ENCODE measurements at regions of chr12 and their contacts with region 1.

Region 1: DNA sequence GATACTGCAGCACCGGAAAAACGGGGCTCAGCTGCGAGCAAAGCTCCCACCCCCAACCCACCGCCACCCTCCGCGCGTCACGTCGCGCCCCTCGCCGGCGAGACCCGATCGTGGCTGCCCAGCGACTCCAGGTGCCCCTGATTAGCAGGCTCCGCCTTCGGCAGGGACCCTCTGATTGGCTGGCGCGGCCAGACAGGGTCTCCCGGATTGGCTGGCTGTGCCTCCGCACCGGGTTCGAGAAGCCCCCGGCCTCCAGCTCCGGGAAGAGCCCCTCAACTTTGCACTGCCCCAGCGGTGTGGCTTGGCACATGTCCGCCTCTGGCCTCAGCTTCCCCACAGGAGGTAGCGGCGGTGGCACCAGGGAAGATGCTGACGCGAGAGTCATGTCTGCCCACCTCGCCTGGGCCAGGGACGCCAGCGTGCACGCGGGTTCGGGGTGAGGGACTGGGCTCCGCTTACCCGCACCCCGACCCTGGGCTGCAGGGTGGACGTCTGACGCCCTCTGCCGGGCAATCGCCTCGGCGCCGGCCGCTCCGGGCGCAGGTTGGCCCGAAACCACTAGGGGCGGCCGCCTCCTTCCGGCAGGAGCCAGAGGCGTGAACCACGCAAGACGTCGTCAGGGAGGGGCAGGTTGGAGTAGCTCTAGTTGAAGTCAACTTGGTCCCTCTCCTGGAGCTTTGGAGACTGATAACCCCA is 498 bp upstream of the RHOF start:
- DNase-seq: peak; percentile 93 to 94
- H3K4me3 ChIP-seq: peak overlapping the region in 2 of 3 donors; percentile 3 to 32
- H3K27ac ChIP-seq: peak overlapping the region; percentile 97 to 100 (median 100)
- H3K4me1 ChIP-seq: peaks cover 62 to 78% of the 10 kb centered on the region in 2 donors
- H3K27me3 ChIP-seq: no peaks in the 10 kb centered on the region
- CTCF ChIP-seq: peak; percentile 98 to 100 (median 100)
- POLR2A ChIP-seq: peak in 1 of 2 donors; percentile 28

Region 2: GRCh38 chr12:121811434-121812319 is 17.7 kb after region 1 on chr12:
- intact Hi-C with region 1: loop called (anchors 2 kb)
- DNase-seq: peak; percentile 81
- H3K4me3 ChIP-seq: peak overlapping the region; percentile 7 to 36 (median 27)
- H3K27ac ChIP-seq: peak overlapping the region in 2 of 3 donors; percentile 59 to 69
- H3K4me1 ChIP-seq: peaks cover 20 to 42% of the 10 kb centered on the region in 2 donors
- H3K27me3 ChIP-seq: no peaks in the 10 kb centered on the region
- CTCF ChIP-seq: peak; percentile 72 to 100 (median 98)
- POLR2A ChIP-seq: no peak

Measured in thyroid gland (tissue), 4 donors.